WTC11 (cell line): ENCODE measurements at regions of chr21 and their contacts with region 1.

Region 1: GRCh38 chr21:36917471-36918158 is 48.9 kb downstream of the HLCS start:
- DNase-seq: peak; percentile 43
- ATAC-seq: peak; percentile 81
- H3K4me3 Mint-ChIP-seq: no peak overlapping the region
- H3K27ac Mint-ChIP-seq: no peak overlapping the region
- H3K4me1 Mint-ChIP-seq: peaks cover 46% of the 10 kb centered on the region
- H3K27me3 Mint-ChIP-seq: no peaks in the 10 kb centered on the region
- CTCF ChIP-seq: 0 out of 2 replicates have a peak, but pooled peaks have one; percentile 14

Region 2: DNA sequence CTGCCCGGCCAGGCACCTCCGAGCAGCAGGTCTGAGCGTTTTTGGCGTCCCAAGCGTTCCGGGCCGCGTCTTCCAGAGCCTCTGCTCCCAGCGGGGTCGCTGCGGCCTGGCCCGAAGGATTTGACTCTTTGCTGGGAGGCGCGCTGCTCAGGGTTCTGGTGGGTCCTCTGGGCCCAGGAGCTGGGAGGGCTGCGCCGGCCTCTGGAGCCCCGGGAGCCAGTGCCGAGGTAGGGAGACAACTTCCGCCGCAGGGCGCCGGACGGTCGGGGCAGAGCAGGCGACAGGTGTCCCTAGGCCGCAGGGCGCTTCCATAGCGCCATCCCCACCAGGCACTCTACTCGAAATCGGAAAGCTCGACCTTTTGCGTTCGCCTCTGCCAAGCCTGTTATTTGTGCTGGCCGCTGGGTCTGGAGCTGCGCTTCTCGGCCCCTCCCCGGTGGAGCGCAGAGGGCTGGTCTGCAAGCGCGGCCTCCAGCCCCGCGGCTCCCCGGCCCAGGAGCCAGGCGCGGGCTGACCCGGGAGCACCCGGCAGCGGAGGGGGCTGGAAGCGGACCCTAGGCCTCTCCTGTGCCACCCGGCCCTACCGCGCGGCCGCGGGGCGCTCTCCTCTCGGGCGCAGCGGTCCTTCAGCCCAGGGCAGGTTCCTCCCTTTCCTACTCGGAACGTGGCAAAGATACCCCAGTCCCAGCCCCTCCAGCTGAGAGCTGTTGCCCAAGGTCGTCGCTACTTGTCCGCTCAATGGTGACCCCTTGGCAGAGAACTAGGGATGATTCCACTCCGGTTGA is 216.5 kb before region 1 on chr21:
- CTCF ChIA-PET with region 1: interaction called, 11 read pairs
- POLR2A ChIA-PET with region 1: no interaction called
- DNase-seq: peak; percentile 52
- ATAC-seq: peak; percentile 6
- H3K4me3 Mint-ChIP-seq: peak overlapping the region; percentile 63
- H3K27ac Mint-ChIP-seq: no peak overlapping the region
- H3K4me1 Mint-ChIP-seq: peaks cover 53% of the 10 kb centered on the region
- H3K27me3 Mint-ChIP-seq: peaks cover 100% of the 10 kb centered on the region
- CTCF ChIP-seq: no peak

Region 3: DNA sequence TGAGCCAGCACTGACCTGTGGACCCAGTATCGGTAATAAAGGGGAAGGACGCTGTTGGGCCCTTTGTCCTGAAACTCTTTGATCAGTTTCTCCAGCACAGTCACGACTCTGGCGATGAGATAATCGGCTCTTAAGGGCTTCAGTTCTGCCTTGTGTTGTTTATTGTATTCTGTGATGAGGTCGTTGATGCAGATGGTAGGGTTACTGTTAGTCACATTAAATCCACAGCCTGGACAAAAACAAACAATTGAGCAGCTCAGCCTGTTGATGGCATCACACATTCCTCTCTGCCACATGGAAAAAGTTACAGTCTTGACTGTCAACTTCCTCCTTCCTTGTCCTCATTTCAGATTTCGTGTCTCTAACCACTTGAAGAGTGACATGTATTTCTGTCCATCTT is 161.1 kb before region 1 on chr21:
- CTCF ChIA-PET with region 1: interaction called, 15 read pairs
- POLR2A ChIA-PET with region 1: no interaction called
- DNase-seq: no peak
- ATAC-seq: no peak
- H3K4me3 Mint-ChIP-seq: no peak overlapping the region
- H3K27ac Mint-ChIP-seq: no peak overlapping the region
- H3K4me1 Mint-ChIP-seq: peaks cover 24% of the 10 kb centered on the region
- H3K27me3 Mint-ChIP-seq: no peaks in the 10 kb centered on the region
- CTCF ChIP-seq: no peak

Region 4: DNA sequence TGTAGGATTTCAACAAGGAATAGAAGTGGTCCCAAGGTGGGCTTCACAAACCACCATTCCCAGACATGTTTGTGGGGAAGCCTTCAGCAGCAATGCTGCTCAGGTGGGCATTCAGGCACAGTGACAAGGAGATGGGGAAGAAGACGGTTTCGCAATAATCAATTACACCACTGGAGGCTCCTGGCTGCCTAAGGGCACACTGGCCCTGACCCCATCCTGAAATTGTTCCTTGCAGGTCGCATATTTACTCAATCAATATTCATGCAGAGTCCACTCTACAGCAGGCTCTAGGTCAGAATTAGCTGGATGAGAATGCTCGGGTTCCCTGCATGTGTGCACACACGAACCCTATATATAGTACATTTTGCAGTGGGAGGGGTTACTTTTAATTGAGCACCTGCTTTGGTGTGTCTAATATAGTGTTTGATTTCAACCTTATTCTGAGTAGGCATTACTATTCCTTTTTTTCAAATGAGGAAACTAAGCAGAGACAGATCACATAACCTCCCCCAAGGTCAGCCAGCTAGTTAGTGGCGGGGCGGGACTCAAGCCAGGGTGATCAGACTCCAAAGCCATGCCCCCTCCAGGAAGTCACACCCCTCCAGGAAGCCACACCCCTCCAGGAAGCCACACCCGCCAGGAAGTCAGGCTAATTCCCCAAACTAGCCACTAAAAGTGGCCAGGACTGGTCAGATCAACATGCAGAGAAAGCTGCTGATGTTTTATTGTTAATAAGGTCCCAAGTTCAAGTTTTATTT is 57.7 kb before region 1 on chr21:
- CTCF ChIA-PET with region 1: interaction called, 16 read pairs
- POLR2A ChIA-PET with region 1: interaction called, 3 read pairs
- DNase-seq: peak; percentile 82
- ATAC-seq: peak; percentile 99
- H3K4me3 Mint-ChIP-seq: no peak overlapping the region
- H3K27ac Mint-ChIP-seq: no peak overlapping the region
- H3K4me1 Mint-ChIP-seq: peaks cover 20% of the 10 kb centered on the region
- H3K27me3 Mint-ChIP-seq: no peaks in the 10 kb centered on the region; the same call in 1 of the 2 replicates
- CTCF ChIP-seq: no peak

Region 5: GRCh38 chr21:36927719-36928117 is 10.1 kb after region 1 on chr21:
- CTCF ChIA-PET with region 1: interaction called, 17 read pairs
- POLR2A ChIA-PET with region 1: interaction called, 4 read pairs
- DNase-seq: peak; percentile 86
- ATAC-seq: peak; percentile 96
- H3K4me3 Mint-ChIP-seq: no peak overlapping the region
- H3K27ac Mint-ChIP-seq: no peak overlapping the region
- H3K4me1 Mint-ChIP-seq: no peaks in the 10 kb centered on the region
- H3K27me3 Mint-ChIP-seq: no peaks in the 10 kb centered on the region
- CTCF ChIP-seq: peak; percentile 67